ENCODE measurements at regions of chr4 and their contacts with region 1.

Region 1: DNA sequence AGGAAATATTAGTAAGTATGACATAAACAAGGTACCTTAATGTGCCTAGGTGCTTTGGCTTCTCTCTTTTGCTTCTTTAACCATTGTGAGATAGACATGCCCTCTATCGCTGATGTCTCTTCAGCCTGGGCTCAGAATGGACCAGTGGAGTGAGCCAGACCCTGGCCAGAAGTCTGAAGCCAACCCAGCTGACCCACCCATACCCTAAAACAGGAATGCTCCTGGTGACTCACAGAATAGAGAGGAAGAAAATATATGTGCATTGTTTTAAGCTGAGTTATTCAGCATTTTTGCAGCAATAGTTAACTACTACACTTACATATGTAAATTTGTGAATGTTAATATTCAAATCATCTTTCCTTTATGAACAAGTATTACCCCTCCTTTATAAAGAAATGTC is 167.5 kb upstream of the PCDH10 start:
- DNase-seq: no peak
- ATAC-seq: no peak
- H3K4me3 ChIP-seq: no peak overlapping the region
- H3K4me3 Mint-ChIP-seq: no peak overlapping the region
- H3K27ac ChIP-seq: no peak overlapping the region
- H3K27ac Mint-ChIP-seq: no peak overlapping the region
- H3K4me1 ChIP-seq: no peaks in the 10 kb centered on the region
- H3K4me1 Mint-ChIP-seq: no peaks in the 10 kb centered on the region
- H3K27me3 ChIP-seq: no peaks in the 10 kb centered on the region
- H3K27me3 Mint-ChIP-seq: no peaks in the 10 kb centered on the region
- CTCF ChIP-seq: no peak

Region 2: DNA sequence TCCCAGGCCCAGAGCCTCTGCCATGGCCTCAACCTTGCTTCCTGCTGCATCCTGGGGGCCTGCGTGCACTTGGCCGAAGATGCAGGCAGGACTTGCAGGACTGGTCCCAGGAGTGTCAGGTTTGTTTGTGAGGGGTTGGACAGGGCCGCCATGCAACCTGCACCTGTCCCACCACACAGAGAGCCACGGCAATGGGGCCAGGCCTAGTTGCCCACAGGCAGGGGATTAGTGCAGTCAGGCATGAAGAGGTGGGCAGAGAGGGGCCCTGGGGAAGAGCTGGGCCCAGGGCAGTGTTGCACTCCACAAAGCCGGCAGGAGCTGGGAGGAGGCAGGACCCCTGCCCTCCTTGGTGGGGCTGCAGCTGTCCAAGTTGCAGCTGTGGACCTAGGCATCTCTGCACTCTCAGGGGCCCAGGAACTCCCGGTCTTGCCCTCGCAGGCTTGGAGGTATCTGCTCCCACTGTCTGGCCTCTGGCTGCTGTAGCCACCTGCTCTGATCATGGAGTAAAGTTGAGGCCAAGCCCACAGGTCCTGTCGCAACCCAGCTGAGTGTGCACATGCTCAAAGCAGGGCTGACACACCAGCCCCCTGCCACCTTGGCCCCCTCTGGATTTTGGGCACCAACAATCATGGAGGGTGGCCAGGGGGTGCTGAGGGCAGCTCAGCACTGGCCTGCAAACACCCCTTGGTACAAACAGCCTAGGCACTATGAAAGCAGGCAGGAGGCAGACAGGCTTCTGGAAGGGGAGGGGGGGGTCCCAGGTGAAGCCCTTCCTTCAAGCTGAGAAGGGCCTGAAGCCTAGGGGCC is 23.0 kb before region 1 on chr4:
- CTCF ChIA-PET with region 1: no interaction called
- POLR2A ChIA-PET with region 1: no interaction called
- intact Hi-C with region 1: loop called in 1 of 2 experiments (anchors 1 kb)
- DNase-seq: peak in 1 of 9 experiments; percentile 17
- ATAC-seq: no peak
- H3K4me3 ChIP-seq: no peak overlapping the region
- H3K4me3 Mint-ChIP-seq: no peak overlapping the region
- H3K27ac ChIP-seq: no peak overlapping the region
- H3K27ac Mint-ChIP-seq: no peak overlapping the region
- H3K4me1 ChIP-seq: no peaks in the 10 kb centered on the region
- H3K4me1 Mint-ChIP-seq: no peaks in the 10 kb centered on the region
- H3K27me3 ChIP-seq: no peaks in the 10 kb centered on the region
- H3K27me3 Mint-ChIP-seq: no peaks in the 10 kb centered on the region
- CTCF ChIP-seq: no peak

Region 3: GRCh38 chr4:133000012-133000411 is 18.4 kb after region 1 on chr4:
- CTCF ChIA-PET with region 1: no interaction called
- POLR2A ChIA-PET with region 1: no interaction called
- intact Hi-C with region 1: no loop called
- DNase-seq: no peak
- ATAC-seq: no peak
- H3K4me3 ChIP-seq: no peak overlapping the region
- H3K4me3 Mint-ChIP-seq: no peak overlapping the region
- H3K27ac ChIP-seq: no peak overlapping the region
- H3K27ac Mint-ChIP-seq: no peak overlapping the region
- H3K4me1 ChIP-seq: no peaks in the 10 kb centered on the region
- H3K4me1 Mint-ChIP-seq: no peaks in the 10 kb centered on the region
- H3K27me3 ChIP-seq: no peaks in the 10 kb centered on the region
- H3K27me3 Mint-ChIP-seq: no peaks in the 10 kb centered on the region
- CTCF ChIP-seq: no peak

Region 4: GRCh38 chr4:133046156-133046555 is 64.5 kb after region 1 on chr4:
- CTCF ChIA-PET with region 1: no interaction called
- POLR2A ChIA-PET with region 1: no interaction called
- intact Hi-C with region 1: no loop called
- DNase-seq: no peak
- ATAC-seq: no peak
- H3K4me3 ChIP-seq: no peak overlapping the region
- H3K4me3 Mint-ChIP-seq: no peak overlapping the region
- H3K27ac ChIP-seq: no peak overlapping the region
- H3K27ac Mint-ChIP-seq: no peak overlapping the region
- H3K4me1 ChIP-seq: no peaks in the 10 kb centered on the region
- H3K4me1 Mint-ChIP-seq: no peaks in the 10 kb centered on the region
- H3K27me3 ChIP-seq: no peaks in the 10 kb centered on the region
- H3K27me3 Mint-ChIP-seq: no peaks in the 10 kb centered on the region
- CTCF ChIP-seq: no peak

Measured in CD8-positive, alpha-beta T cell (primary cell).